T-cell (primary cell): ENCODE measurements at regions of chr13 and their contacts with region 1.

Region 1: DNA sequence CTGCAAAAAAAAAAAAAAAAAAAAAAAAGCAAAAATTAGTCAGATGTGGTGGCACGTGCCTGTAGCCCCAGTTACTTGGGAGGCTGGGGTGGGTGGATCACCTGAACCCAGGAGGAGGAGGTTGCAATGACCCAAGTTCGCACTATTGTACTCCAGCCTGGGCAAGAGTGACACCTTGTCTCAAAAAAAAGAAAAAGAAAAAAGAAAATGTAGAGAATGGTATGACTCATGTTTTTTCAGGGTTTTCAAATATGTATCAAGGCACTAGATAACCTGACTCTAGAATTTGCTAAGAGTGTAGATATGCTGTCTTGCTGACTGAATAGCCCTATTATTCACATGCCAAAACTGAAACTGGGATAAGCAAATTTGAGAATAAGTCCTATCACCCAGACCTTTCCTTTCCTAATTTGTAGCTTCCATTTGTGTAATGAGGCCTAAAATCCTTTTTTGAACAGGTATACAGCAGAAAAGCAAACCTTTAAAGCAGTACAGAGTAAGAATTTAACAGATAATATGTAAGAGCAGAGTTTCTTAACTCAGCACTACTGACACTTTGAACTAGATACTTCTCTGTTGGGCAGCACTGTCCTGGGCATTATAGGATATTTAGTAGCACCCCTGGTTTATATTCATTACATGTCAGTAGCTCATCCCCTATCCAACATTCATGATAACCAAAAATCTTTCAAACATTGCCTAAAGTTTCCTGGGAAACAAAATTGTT is 108.6 kb downstream of the ELF1 start:
- DNase-seq: no peak
- ATAC-seq: no peak
- H3K4me3 ChIP-seq: no peak overlapping the region
- H3K4me3 Mint-ChIP-seq: no peak overlapping the region
- H3K27ac ChIP-seq: no peak overlapping the region
- H3K27ac Mint-ChIP-seq: no peak overlapping the region
- H3K4me1 ChIP-seq: no peaks in the 10 kb centered on the region
- H3K4me1 Mint-ChIP-seq: peaks cover 10 to 25% (median 18%) of the 10 kb centered on the region in 3 donors
- H3K27me3 ChIP-seq: no peaks in the 10 kb centered on the region
- H3K27me3 Mint-ChIP-seq: no peaks in the 10 kb centered on the region

Region 2: GRCh38 chr13:41384755-41385503 is 474.4 kb after region 1 on chr13:
- CTCF ChIA-PET with region 1: no interaction called
- POLR2A ChIA-PET with region 1: interaction called in 1 of 2 experiments, 10 read pairs
- DNase-seq: peak in 1 of 35 experiments; percentile 23
- ATAC-seq: no peak
- H3K4me3 ChIP-seq: no peak overlapping the region
- H3K4me3 Mint-ChIP-seq: no peak overlapping the region
- H3K27ac ChIP-seq: no peak overlapping the region
- H3K27ac Mint-ChIP-seq: no peak overlapping the region
- H3K4me1 ChIP-seq: peaks cover 3 to 5% of the 10 kb centered on the region in 2 experiments
- H3K4me1 Mint-ChIP-seq: peaks cover 15 to 28% (median 22%) of the 10 kb centered on the region in 3 donors
- H3K27me3 ChIP-seq: no peaks in the 10 kb centered on the region
- H3K27me3 Mint-ChIP-seq: no peaks in the 10 kb centered on the region